CD4-positive, alpha-beta T cell (primary cell): ENCODE measurements at regions of chr9 and their contacts with region 1.

Region 1: GRCh38 chr9:84123648-84124406 is 143.2 kb downstream of the RMI1 start:
- DNase-seq: no peak
- ATAC-seq: no peak
- H3K4me3 ChIP-seq: no peak overlapping the region
- H3K4me3 Mint-ChIP-seq: no peak overlapping the region
- H3K27ac ChIP-seq: no peak overlapping the region
- H3K27ac Mint-ChIP-seq: no peak overlapping the region
- H3K4me1 ChIP-seq: no peaks in the 10 kb centered on the region
- H3K4me1 Mint-ChIP-seq: no peaks in the 10 kb centered on the region
- H3K27me3 ChIP-seq: peaks cover 0 to 6% of the 10 kb centered on the region in 2 experiments
- H3K27me3 Mint-ChIP-seq: peaks cover 38% of the 10 kb centered on the region
- CTCF ChIP-seq: no peak

Region 2: DNA sequence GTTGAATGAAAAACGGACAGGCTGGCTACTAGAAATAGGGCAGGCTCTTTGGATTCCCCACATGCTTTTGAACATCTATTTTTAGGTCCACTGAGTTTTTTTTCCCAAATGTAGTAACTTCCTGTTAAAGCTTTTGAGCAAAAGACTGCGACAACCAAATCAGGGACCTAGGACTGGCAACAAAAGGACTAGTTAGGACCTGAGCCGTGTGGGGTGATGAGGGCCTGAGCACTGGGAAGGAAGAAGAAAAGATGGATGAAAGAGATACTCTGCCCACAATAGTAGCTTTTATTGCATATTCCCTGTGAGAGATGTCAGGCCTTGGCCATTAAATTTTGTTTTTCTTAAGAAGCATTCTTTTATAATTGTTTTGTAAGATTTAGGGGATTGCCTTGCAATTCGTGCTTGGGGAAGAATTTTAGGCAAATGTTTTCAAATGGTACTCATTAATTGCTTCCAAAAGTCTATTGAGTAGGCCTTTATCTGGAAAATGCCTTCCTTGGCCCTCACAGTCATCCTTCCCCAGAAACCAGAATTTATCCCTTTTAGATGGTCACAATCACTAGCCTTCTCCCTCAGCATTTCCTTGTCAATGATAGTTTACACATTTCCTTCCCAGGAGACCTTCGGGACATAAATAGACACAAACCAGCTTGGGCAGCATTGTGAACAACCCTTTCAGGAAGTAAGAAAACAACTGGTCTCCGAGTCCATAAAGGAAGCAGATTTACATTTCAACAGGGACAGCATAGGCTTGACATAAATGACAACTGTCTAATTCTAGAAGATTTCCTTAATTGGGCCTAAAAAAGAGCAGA is 23.3 kb after region 1 on chr9:
- CTCF ChIA-PET with region 1: interaction called, 3 read pairs
- POLR2A ChIA-PET with region 1: no interaction called
- intact Hi-C with region 1: loop called in 1 of 2 experiments (anchors 1 kb)
- DNase-seq: no peak
- ATAC-seq: no peak
- H3K4me3 ChIP-seq: no peak overlapping the region
- H3K4me3 Mint-ChIP-seq: no peak overlapping the region
- H3K27ac ChIP-seq: no peak overlapping the region
- H3K27ac Mint-ChIP-seq: no peak overlapping the region
- H3K4me1 ChIP-seq: no peaks in the 10 kb centered on the region
- H3K4me1 Mint-ChIP-seq: no peaks in the 10 kb centered on the region
- H3K27me3 ChIP-seq: peaks cover 9 to 12% of the 10 kb centered on the region in 2 experiments
- H3K27me3 Mint-ChIP-seq: peaks cover 18% of the 10 kb centered on the region
- CTCF ChIP-seq: no peak

Region 3: DNA sequence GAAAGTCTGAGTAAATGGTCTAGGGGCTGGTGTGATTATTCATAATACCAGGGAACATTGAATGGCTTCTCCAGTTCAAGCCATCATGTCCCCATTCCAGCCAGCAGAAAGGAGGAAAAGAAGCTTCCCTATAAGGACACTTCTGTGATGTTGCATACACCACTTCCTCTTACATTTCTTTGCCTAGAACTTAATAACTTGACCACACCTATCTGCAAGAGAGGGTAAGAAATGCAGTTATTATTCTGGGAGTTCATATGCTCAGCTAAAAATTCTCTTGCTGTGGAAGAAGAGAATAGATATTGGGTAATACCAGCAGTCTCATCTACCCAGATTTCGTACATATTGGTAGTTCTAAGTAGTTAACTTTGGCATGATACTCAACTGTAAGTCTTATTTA is 50.7 kb after region 1 on chr9:
- CTCF ChIA-PET with region 1: no interaction called
- POLR2A ChIA-PET with region 1: no interaction called
- intact Hi-C with region 1: no loop called
- DNase-seq: peak in 1 of 14 experiments; percentile 5
- ATAC-seq: no peak
- H3K4me3 ChIP-seq: no peak overlapping the region
- H3K4me3 Mint-ChIP-seq: no peak overlapping the region
- H3K27ac ChIP-seq: no peak overlapping the region
- H3K27ac Mint-ChIP-seq: no peak overlapping the region
- H3K4me1 ChIP-seq: no peaks in the 10 kb centered on the region
- H3K4me1 Mint-ChIP-seq: no peaks in the 10 kb centered on the region
- H3K27me3 ChIP-seq: no peaks in the 10 kb centered on the region
- H3K27me3 Mint-ChIP-seq: peaks cover 8% of the 10 kb centered on the region
- CTCF ChIP-seq: no peak